OCI-LY7 (cell line): ENCODE measurements at regions of chr17 and their contacts with region 1.

Region 1: DNA sequence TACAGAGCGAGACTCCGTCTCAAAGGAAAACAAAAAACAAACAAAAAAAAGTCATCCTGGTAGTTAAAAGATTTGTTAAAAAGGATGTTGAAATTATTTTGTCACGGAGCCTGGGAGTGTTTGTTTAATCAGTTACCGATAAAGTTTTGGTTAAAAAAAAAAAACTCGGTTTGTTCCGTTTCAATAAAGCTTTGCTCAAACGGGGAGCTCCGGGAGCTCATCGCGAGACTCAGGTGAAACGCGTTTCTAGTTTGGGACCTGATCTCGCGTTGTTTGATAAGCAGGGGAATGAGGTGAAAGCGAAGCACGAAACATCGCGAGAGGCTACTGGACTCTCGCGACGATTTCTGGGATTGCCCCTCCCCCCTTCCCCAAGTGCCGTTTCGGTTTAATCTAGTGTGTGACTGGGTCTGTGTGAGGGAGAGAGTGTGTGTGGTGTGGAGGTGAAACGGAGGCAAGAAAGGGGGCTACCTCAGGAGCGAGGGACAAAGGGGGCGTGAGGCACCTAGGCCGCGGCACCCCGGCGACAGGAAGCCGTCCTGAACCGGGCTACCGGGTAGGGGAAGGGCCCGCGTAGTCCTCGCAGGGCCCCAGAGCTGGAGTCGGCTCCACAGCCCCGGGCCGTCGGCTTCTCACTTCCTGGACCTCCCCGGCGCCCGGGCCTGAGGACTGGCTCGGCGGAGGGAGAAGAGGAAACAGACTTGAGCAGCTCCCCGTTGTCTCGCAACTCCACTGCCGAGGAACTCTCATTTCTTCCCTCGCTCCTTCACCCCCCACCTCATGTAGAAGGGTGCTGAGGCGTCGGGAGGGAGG is at the start of gene CDK12:
- DNase-seq: peak; percentile 100
- H3K4me3 ChIP-seq: peak within 1 kb of the TSS; percentile 94
- H3K27ac ChIP-seq: peak within 1 kb of the TSS; percentile 84
- H3K4me1 ChIP-seq: peaks cover 21% of the 10 kb centered on the region
- CTCF ChIP-seq: no peak
- total RNA-seq, gene CDK12: 55.9 and 72.0 TPM in 2 replicates

Region 2: DNA sequence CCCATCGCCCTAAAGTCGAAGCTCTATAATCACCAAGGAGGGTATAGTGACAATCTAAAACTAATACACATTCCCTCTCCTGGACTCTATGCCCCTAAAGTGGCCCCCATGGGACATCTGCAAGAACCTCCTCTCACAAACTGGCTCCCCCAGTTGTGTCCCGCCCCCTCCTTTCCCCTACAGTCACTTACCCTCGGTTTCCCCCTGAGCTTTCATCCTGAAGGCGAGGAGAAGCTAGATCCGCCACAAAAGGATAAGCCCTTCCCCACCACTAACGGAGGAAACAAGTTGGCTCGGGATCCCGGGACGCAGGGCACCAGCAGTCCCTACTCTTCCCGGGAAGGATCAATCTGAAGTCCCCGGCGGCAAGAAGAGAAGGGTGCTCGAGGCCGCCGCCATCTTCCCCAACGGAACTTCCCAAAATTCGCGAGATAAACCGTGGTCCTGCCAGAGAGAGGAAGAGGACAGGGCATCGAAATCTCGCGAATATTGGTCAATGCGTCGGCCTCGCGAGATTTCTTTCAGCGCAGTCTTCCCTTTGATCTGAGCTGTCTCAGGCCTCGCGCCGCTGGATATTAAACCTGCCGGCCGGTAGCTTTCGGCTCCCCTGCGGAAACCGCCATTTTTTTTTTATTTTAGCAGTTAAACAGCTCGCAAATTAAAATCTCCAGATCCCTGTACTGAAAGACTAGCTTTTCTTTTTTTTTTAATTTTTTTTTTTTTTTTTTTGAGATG is 10.3 kb before region 1 on chr17 and contains the start of gene MED1:
- CTCF ChIA-PET with region 1: no interaction called
- POLR2A ChIA-PET with region 1: interaction called, 67 read pairs
- intact Hi-C with region 1: loop called (anchors 1 kb)
- DNase-seq: peak; percentile 100
- H3K4me3 ChIP-seq: peak within 1 kb of the TSS; percentile 95
- H3K27ac ChIP-seq: peak within 1 kb of the TSS; percentile 60
- H3K4me1 ChIP-seq: peaks cover 26% of the 10 kb centered on the region
- CTCF ChIP-seq: no peak
- total RNA-seq, gene MED1: 32.2 and 33.9 TPM in 2 replicates